Endothelial cell of umbilical vein (primary cell): ENCODE measurements at regions of chr2 and their contacts with region 1.

Region 1: DNA sequence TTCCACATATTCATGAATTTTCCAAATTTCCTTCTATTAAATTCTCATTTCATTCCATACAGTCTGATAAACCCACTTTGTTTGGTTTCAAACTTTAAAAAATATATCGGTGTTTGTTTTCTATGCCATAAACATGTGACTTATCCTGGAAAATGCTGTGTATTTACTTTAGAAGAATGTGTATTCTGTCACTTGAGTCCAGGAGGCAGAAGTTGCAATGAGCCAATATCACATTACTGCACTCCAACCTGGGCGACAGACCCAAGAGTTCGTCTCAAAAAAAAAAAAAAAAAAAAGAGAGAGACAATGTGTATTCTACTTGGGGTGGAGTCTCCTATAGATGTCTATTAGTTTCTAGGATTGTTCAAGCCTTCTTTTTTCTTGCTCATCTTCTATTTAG is 31.8 kb downstream of the MBD5 start:
- DNase-seq: no peak
- H3K4me3 ChIP-seq: no peak overlapping the region
- H3K27ac ChIP-seq: no peak overlapping the region
- H3K4me1 ChIP-seq: no peaks in the 10 kb centered on the region
- H3K27me3 ChIP-seq: no peaks in the 10 kb centered on the region
- CTCF ChIP-seq: no peak
- POLR2A ChIP-seq: no peak

Region 2: GRCh38 chr2:148027822-148028221 is 24.9 kb before region 1 on chr2:
- CTCF ChIA-PET with region 1: no interaction called
- POLR2A ChIA-PET with region 1: interaction called, 11 read pairs
- dilution Hi-C with region 1: no loop called
- intact Hi-C with region 1: no loop called
- DNase-seq: no peak
- H3K4me3 ChIP-seq: no peak overlapping the region
- H3K27ac ChIP-seq: no peak overlapping the region
- H3K4me1 ChIP-seq: peaks cover 10% of the 10 kb centered on the region
- H3K27me3 ChIP-seq: no peaks in the 10 kb centered on the region
- CTCF ChIP-seq: no peak
- POLR2A ChIP-seq: no peak

Region 3: DNA sequence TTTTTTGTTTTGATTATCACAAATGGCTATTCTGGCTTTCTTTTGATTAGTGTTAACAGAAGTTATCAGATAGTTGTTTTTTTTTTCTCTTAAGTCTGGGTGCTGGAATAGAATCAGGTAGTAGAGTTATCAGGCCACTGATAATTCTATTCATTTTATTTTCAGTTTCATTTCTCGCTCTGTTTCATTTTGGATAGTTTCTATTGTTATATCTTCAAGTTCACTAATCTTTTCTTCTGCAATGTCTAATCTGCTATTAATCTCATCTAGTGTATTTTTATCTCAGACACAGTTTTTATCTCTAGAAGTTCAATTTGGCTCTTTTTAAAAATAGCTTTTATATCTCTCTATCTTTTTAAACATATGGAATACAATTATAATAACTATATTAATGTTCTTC is 350.1 kb after region 1 on chr2:
- CTCF ChIA-PET with region 1: no interaction called
- POLR2A ChIA-PET with region 1: no interaction called
- dilution Hi-C with region 1: no loop called
- intact Hi-C with region 1: no loop called
- DNase-seq: no peak
- H3K4me3 ChIP-seq: no peak overlapping the region
- H3K27ac ChIP-seq: no peak overlapping the region
- H3K4me1 ChIP-seq: no peaks in the 10 kb centered on the region
- H3K27me3 ChIP-seq: no peaks in the 10 kb centered on the region
- CTCF ChIP-seq: no peak
- POLR2A ChIP-seq: no peak